B cell (primary cell): ENCODE measurements at regions of chr17 and their contacts with region 1.

Region 1: DNA sequence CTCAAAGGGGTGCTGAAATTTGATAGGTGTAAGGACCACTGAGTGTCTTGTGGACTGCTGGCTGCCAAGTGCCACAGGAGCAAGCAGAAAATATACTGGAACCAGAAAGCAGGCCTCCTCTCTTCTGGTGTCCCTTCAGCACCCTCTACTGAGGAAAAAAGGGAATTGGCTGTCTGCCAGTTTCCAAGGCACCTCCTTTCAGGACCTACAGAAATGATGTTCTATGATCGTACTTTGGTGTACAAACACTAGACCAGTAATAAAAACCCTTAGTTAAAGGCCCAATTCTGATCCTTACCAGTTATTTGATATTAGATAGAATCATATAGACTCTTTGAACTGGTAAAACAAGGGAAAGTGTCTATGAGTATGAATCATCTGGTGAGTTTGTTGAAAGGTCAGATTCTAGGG is 35.8 kb upstream of the BCAS3 start:
- DNase-seq: peak; percentile 59
- ATAC-seq: peak; percentile 36
- H3K4me3 ChIP-seq: no peak overlapping the region
- H3K4me3 Mint-ChIP-seq: no peak overlapping the region
- H3K27ac ChIP-seq: no peak overlapping the region
- H3K27ac Mint-ChIP-seq: no peak overlapping the region
- H3K4me1 ChIP-seq: no peaks in the 10 kb centered on the region
- H3K4me1 Mint-ChIP-seq: peaks cover 2% of the 10 kb centered on the region
- H3K27me3 ChIP-seq: no peaks in the 10 kb centered on the region
- H3K27me3 Mint-ChIP-seq: no peaks in the 10 kb centered on the region
- CTCF ChIP-seq: peak; percentile 27

Region 2: DNA sequence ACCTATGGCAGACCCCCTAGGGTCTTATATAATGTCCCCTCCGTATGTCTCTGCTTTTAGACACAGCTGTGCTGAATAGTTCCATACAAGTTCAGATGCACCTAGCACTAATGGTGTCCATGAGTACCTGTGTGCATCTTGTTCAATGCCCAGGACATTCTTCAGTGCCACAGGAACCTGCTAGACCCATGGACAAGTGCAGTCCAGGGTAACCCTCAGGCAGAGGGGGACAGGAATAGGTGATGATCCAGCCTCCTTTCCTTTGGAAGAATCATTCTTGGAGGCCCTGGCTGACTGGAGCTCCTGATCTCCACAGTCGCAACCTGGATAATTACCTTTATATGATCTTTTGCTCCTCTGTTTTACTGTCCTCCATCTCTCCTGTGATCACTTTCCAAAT is 70.3 kb before region 1 on chr17:
- CTCF ChIA-PET with region 1: interaction called, 16 read pairs
- POLR2A ChIA-PET with region 1: interaction called, 5 read pairs
- intact Hi-C with region 1: no loop called
- DNase-seq: no peak
- ATAC-seq: no peak
- H3K4me3 ChIP-seq: no peak overlapping the region
- H3K4me3 Mint-ChIP-seq: no peak overlapping the region
- H3K27ac ChIP-seq: no peak overlapping the region
- H3K27ac Mint-ChIP-seq: no peak overlapping the region
- H3K4me1 ChIP-seq: no peaks in the 10 kb centered on the region
- H3K4me1 Mint-ChIP-seq: no peaks in the 10 kb centered on the region
- H3K27me3 ChIP-seq: no peaks in the 10 kb centered on the region
- H3K27me3 Mint-ChIP-seq: peaks cover 17% of the 10 kb centered on the region
- CTCF ChIP-seq: no peak

Region 3: GRCh38 chr17:60577147-60577915 is 64.5 kb before region 1 on chr17:
- CTCF ChIA-PET with region 1: interaction called, 16 read pairs
- POLR2A ChIA-PET with region 1: no interaction called
- intact Hi-C with region 1: no loop called
- DNase-seq: no peak
- ATAC-seq: no peak
- H3K4me3 ChIP-seq: peak overlapping the region in 1 of 5 experiments; percentile 11
- H3K4me3 Mint-ChIP-seq: peak overlapping the region; percentile 46
- H3K27ac ChIP-seq: no peak overlapping the region
- H3K27ac Mint-ChIP-seq: no peak overlapping the region
- H3K4me1 ChIP-seq: peaks cover 0 to 4% of the 10 kb centered on the region in 2 donors
- H3K4me1 Mint-ChIP-seq: peaks cover 4% of the 10 kb centered on the region
- H3K27me3 ChIP-seq: no peaks in the 10 kb centered on the region
- H3K27me3 Mint-ChIP-seq: peaks cover 16% of the 10 kb centered on the region
- CTCF ChIP-seq: no peak

Region 4: DNA sequence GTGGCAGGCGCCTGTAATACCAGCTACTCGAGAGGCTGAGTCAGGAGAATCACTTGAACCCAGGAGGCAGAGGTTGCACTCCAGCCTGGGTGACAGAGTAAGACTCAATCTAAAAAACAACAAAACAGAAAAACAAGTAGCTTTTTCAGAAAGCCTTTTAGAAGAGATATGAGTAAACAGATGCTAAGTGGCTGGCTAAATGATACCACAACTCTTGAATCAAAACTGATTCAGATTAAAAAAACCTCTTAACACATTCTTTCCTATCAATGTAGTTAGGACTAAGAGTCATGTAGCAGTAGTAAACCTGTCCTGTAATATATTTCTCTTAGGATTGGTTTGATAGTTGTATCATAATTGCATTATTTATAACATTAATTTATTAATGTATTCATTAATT is 18.9 kb before region 1 on chr17:
- CTCF ChIA-PET with region 1: interaction called, 15 read pairs
- POLR2A ChIA-PET with region 1: no interaction called
- intact Hi-C with region 1: no loop called
- DNase-seq: no peak
- ATAC-seq: no peak
- H3K4me3 ChIP-seq: no peak overlapping the region
- H3K4me3 Mint-ChIP-seq: no peak overlapping the region
- H3K27ac ChIP-seq: no peak overlapping the region
- H3K27ac Mint-ChIP-seq: no peak overlapping the region
- H3K4me1 ChIP-seq: no peaks in the 10 kb centered on the region
- H3K4me1 Mint-ChIP-seq: peaks cover 16% of the 10 kb centered on the region
- H3K27me3 ChIP-seq: no peaks in the 10 kb centered on the region
- H3K27me3 Mint-ChIP-seq: no peaks in the 10 kb centered on the region
- CTCF ChIP-seq: no peak

Region 5: GRCh38 chr17:60630352-60630751 is 11.5 kb before region 1 on chr17:
- CTCF ChIA-PET with region 1: interaction called, 21 read pairs
- POLR2A ChIA-PET with region 1: no interaction called
- intact Hi-C with region 1: no loop called
- DNase-seq: no peak
- ATAC-seq: no peak
- H3K4me3 ChIP-seq: no peak overlapping the region
- H3K4me3 Mint-ChIP-seq: no peak overlapping the region
- H3K27ac ChIP-seq: no peak overlapping the region
- H3K27ac Mint-ChIP-seq: no peak overlapping the region
- H3K4me1 ChIP-seq: no peaks in the 10 kb centered on the region
- H3K4me1 Mint-ChIP-seq: peaks cover 2% of the 10 kb centered on the region
- H3K27me3 ChIP-seq: no peaks in the 10 kb centered on the region
- H3K27me3 Mint-ChIP-seq: no peaks in the 10 kb centered on the region
- CTCF ChIP-seq: no peak

Region 6: DNA sequence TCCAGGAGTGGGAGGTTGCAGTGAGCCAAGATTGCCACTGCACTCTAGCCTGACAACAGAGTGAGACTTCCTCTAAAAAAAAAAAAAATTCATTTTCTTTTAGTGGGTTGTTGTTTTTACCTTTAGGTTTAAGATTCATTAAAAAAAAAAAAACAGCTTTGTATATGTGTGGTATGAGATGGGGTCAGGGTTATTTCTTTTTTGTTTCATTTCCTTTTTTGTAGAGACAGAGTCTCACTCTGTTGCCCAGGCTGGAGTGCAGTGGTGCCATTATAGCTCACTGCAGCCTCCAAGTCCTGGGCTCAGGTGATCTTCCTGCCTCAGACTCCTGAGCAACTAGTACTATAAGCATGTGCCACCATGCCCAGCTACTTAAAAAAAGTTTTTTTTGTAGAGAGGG is 82.8 kb after region 1 on chr17:
- CTCF ChIA-PET with region 1: no interaction called
- POLR2A ChIA-PET with region 1: no interaction called
- intact Hi-C with region 1: no loop called
- DNase-seq: peak; percentile 31
- ATAC-seq: peak; percentile 87
- H3K4me3 ChIP-seq: no peak overlapping the region
- H3K4me3 Mint-ChIP-seq: no peak overlapping the region
- H3K27ac ChIP-seq: no peak overlapping the region
- H3K27ac Mint-ChIP-seq: peak overlapping the region; percentile 65
- H3K4me1 ChIP-seq: peaks cover 3 to 11% of the 10 kb centered on the region in 2 donors
- H3K4me1 Mint-ChIP-seq: peaks cover 13% of the 10 kb centered on the region
- H3K27me3 ChIP-seq: no peaks in the 10 kb centered on the region
- H3K27me3 Mint-ChIP-seq: no peaks in the 10 kb centered on the region
- CTCF ChIP-seq: no peak

Region 7: DNA sequence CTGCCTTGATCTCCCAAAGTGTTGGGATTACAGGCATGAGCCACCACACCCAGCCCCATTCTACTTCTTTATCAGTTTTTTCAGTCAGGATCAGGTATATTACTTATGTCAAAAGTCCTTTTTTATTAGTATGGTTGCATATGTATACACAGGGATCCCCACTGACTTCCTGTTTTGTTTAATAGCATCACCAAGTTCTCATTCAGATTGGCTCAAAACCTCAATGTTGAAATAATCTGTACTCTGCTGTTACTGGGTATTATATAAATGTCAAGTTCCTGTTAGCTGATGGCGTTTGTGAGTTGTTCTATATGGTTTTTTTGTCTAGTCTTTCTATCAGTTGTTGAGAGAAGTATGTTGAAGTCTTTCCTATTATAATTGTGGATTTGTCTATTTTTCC is 204.4 kb after region 1 on chr17:
- CTCF ChIA-PET with region 1: no interaction called
- POLR2A ChIA-PET with region 1: no interaction called
- intact Hi-C with region 1: no loop called
- DNase-seq: no peak
- ATAC-seq: no peak
- H3K4me3 ChIP-seq: no peak overlapping the region
- H3K4me3 Mint-ChIP-seq: no peak overlapping the region
- H3K27ac ChIP-seq: no peak overlapping the region
- H3K27ac Mint-ChIP-seq: no peak overlapping the region
- H3K4me1 ChIP-seq: no peaks in the 10 kb centered on the region
- H3K4me1 Mint-ChIP-seq: peaks cover 3% of the 10 kb centered on the region
- H3K27me3 ChIP-seq: no peaks in the 10 kb centered on the region
- H3K27me3 Mint-ChIP-seq: no peaks in the 10 kb centered on the region
- CTCF ChIP-seq: no peak